Activated B cell treated with CpG ODN at 0.5 μM for 24 hours (primary cell): ENCODE measurements at regions of chr3 and their contacts with region 1.

Region 1: GRCh38 chr3:197736491-197737318 is at the start of gene RUBCN:
- DNase-seq: peak; percentile 88
- ATAC-seq: peak; percentile 87
- H3K4me3 Mint-ChIP-seq: peak within 1 kb of the TSS; percentile 94
- H3K27ac Mint-ChIP-seq: peak within 1 kb of the TSS; percentile 98
- H3K4me1 Mint-ChIP-seq: peaks cover 58% of the 10 kb centered on the region
- H3K27me3 Mint-ChIP-seq: no peaks in the 10 kb centered on the region
- CTCF ChIP-seq: no peak
- total RNA-seq, gene RUBCN: 196 and 217 TPM in 2 replicates

Region 2: DNA sequence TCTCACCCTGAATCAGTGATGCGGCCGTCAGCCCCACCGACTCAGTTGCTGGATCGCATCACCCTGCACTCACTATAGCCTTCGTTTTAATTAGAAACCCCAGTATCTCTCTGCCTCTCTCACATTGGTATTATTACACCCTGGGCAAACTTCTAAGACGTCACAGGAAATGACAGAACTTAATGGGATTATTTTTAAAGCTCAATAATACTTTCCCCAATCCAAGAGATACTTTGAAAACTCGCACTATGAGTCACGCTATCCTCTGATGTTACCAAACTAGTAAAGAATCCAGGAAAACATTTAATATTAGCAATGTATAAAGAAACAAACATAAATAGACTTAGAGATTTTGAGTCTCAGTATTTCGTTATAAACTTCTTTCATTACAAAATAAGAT is 36.6 kb before region 1 on chr3:
- CTCF ChIA-PET with region 1: interaction called, 3 read pairs
- POLR2A ChIA-PET with region 1: interaction called, 28 read pairs
- intact Hi-C with region 1: loop called (anchors 5 kb)
- DNase-seq: no peak
- ATAC-seq: no peak
- H3K4me3 Mint-ChIP-seq: no peak overlapping the region
- H3K27ac Mint-ChIP-seq: no peak overlapping the region
- H3K4me1 Mint-ChIP-seq: peaks cover 3% of the 10 kb centered on the region
- H3K27me3 Mint-ChIP-seq: no peaks in the 10 kb centered on the region
- CTCF ChIP-seq: no peak

Region 3: GRCh38 chr3:198026620-198027019 is 289.9 kb after region 1 on chr3:
- CTCF ChIA-PET with region 1: no interaction called
- POLR2A ChIA-PET with region 1: no interaction called
- intact Hi-C with region 1: no loop called
- DNase-seq: no peak
- ATAC-seq: no peak
- H3K4me3 Mint-ChIP-seq: no peak overlapping the region
- H3K27ac Mint-ChIP-seq: no peak overlapping the region
- H3K4me1 Mint-ChIP-seq: no peaks in the 10 kb centered on the region
- H3K27me3 Mint-ChIP-seq: no peaks in the 10 kb centered on the region
- CTCF ChIP-seq: no peak